ENCODE measurements at regions of chr22 and their contacts with region 1.

Region 1: DNA sequence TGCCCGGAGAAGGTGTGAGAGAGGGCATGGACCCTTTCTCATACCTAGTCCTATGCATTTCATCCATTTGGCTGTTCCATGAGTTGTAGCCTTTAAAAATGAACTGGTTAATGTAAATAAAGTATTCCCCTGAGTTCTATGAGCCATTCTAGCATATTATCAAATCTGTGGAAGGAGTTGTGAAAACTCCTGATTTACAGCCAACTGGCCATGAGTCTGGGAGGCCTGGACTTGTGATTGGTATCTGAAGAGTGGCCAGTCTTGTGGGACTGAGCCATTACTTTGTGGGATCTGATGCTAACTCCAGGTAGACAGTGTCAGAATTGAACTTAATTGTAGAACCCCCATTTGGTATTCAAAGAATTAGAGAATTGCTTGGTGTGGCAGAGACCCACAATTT is 48.4 kb downstream of the FAM118A start:
- DNase-seq: no peak
- ATAC-seq: no peak
- H3K4me3 ChIP-seq: no peak overlapping the region
- H3K27ac ChIP-seq: no peak overlapping the region
- H3K4me1 ChIP-seq: no peaks in the 10 kb centered on the region
- H3K27me3 ChIP-seq: peaks cover 13% of the 10 kb centered on the region
- CTCF ChIP-seq: no peak
- POLR2A ChIP-seq: no peak
- RAD21 ChIP-seq: no peak

Region 2: GRCh38 chr22:45397806-45398205 is 39.7 kb after region 1 on chr22:
- CTCF ChIA-PET with region 1: no interaction called
- POLR2A ChIA-PET with region 1: no interaction called
- dilution Hi-C with region 1: no loop called
- in situ Hi-C with region 1: no loop called
- intact Hi-C with region 1: loop called (anchors 5 kb)
- DNase-seq: no peak
- ATAC-seq: no peak
- H3K4me3 ChIP-seq: no peak overlapping the region
- H3K27ac ChIP-seq: no peak overlapping the region
- H3K4me1 ChIP-seq: no peaks in the 10 kb centered on the region
- H3K27me3 ChIP-seq: peaks cover 35% of the 10 kb centered on the region
- CTCF ChIP-seq: no peak
- POLR2A ChIP-seq: no peak
- RAD21 ChIP-seq: no peak